Sigmoid colon (tissue), 7 donors: ENCODE measurements at regions of chr10 and their contacts with region 1.

Region 1: DNA sequence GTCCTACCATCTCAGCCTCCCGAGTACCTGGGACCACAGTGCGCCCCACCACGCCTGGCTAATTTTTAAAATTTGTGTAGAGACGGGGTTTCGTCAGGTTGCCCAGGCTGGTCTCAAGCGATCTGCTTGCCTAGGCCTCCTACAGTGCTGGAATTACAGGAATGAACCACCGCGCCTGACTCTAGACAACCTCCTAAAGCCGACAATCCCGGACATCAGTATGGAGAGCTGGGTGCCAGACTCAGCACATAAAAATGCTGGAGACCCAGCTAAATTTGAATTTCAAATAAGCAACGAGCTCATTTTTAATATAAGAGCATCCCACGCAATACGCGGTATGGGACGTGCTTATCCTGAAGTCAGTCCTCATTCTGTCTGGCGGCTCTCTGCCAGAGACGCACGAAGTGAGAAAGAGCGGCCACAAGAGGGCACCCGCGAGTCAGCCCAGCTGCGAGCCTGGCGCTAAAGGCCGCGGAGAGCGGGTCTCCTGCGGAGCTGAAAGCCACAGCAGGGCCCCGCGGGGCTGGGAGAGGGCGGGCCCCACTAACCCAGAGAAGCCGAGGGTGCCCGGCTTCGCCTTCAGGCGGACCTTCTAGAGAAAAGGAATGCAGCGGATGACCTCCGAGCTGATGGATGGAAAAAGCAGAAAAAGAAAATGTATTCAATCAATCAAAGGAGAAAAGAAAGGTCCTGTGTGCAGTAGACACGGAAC is 7.0 kb downstream of the CALY start:
- DNase-seq: peak; percentile 88
- H3K4me3 ChIP-seq: peak overlapping the region in 3 of 4 donors; percentile 21 to 31 (median 25)
- H3K27ac ChIP-seq: no peak overlapping the region
- H3K4me1 ChIP-seq: peaks cover 0 to 28% (median 25%) of the 10 kb centered on the region in 4 donors
- H3K27me3 ChIP-seq: peaks cover 43 to 87% (median 71%) of the 10 kb centered on the region in 3 donors
- CTCF ChIP-seq: peak; percentile 64 to 96 (median 76)
- EP300 ChIP-seq: no peak
- POLR2A ChIP-seq: no peak

Region 2: DNA sequence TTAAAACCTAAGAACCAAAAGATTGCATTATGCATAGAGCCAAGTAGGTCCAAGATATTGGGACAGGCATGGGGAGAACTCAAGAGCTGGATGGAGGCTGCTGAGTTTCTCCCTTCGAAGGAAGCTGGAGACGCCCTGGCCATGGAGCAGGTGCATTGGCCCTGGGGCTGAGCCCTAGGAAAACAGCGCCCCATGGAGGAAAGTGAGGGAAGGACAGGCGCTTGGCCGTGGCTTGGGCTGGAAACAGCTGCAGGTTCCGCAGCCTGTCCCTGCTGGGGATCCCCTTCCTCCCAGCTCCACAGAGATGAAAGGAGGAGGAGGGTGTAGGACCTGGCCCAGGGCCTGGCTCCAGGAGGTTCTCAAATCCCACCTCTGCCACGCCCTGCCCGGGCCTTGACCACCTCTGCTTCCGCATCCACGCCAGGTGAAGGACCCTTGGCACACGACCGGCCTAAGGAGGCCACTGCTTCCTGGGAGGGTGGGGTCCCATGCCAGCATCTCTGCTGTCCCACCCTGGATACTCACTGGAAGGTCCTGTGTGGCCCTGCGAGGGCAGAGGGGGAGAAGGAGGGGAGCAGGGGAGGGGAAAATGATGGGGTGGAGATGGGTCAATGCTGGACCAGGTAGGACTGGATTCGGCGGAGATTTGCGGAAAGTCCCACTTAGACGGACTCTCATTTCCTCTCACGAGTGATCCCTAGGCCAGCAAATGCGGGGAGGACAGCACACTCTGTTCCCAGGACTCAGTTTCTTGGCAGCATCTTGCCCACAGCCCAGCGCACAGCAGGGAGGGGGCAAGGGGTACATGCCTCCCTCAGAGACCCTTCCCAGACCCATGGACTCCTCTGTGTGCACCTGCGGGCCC is 1759.6 kb before region 1 on chr10:
- intact Hi-C with region 1: no loop called
- DNase-seq: no peak
- H3K4me3 ChIP-seq: no peak overlapping the region
- H3K27ac ChIP-seq: no peak overlapping the region
- H3K4me1 ChIP-seq: no peaks in the 10 kb centered on the region
- H3K27me3 ChIP-seq: peaks cover 0 to 7% (median 0%) of the 10 kb centered on the region in 3 donors
- CTCF ChIP-seq: no peak
- EP300 ChIP-seq: no peak
- POLR2A ChIP-seq: no peak

Region 3: GRCh38 chr10:133307776-133308420 is 21.7 kb before region 1 on chr10:
- intact Hi-C with region 1: no loop called
- DNase-seq: no peak
- H3K4me3 ChIP-seq: peak overlapping the region; percentile 60 to 99 (median 96)
- H3K27ac ChIP-seq: peak overlapping the region; percentile 86 to 97 (median 94)
- H3K4me1 ChIP-seq: peaks cover 0 to 55% (median 42%) of the 10 kb centered on the region in 4 donors
- H3K27me3 ChIP-seq: no peaks in the 10 kb centered on the region
- CTCF ChIP-seq: peak in 2 of 4 experiments; percentile 23 to 31
- EP300 ChIP-seq: no peak
- POLR2A ChIP-seq: no peak

Region 4: DNA sequence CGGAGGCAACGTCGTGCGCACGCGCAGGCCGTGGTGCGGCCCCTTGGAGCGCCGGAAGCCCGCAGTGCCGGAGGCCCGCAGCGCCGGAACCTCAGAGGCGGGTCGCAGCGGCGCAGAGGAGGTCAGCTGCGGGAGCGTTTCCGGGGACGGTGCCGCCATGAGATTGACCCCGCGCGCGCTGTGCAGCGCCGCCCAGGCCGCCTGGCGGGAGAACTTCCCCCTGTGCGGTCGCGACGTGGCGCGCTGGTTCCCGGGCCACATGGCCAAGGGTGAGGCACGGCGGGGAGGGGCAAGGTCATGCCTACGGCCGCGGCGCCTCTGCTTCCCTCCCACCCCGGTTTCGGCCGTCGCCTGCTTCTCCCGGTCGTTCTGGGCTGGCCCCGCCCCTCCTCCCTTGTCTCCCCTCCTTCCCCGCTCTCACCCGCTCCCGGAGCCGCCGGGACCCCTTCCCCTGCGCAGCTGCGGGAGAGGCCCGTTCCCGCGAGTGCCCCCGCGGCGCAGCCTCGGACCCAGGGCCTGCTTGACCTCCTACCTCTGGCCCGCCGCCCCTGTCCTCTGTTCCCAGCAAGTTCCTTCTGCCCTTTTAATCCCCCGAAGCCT is 64.5 kb after region 1 on chr10 and contains the start of gene MTG1:
- intact Hi-C with region 1: loop called (anchors 5 kb)
- DNase-seq: peak; percentile 96
- H3K4me3 ChIP-seq: peak within 1 kb of the TSS; percentile 71 to 92 (median 86)
- H3K27ac ChIP-seq: peak within 1 kb of the TSS; percentile 79 to 87 (median 81)
- H3K4me1 ChIP-seq: peaks cover 0 to 20% (median 10%) of the 10 kb centered on the region in 4 donors
- H3K27me3 ChIP-seq: no peaks in the 10 kb centered on the region
- CTCF ChIP-seq: no peak
- EP300 ChIP-seq: no peak
- POLR2A ChIP-seq: peak; percentile 29 to 67
- total RNA-seq, gene MTG1: 14.0 to 28.8 (median 17.0) TPM

Region 5: DNA sequence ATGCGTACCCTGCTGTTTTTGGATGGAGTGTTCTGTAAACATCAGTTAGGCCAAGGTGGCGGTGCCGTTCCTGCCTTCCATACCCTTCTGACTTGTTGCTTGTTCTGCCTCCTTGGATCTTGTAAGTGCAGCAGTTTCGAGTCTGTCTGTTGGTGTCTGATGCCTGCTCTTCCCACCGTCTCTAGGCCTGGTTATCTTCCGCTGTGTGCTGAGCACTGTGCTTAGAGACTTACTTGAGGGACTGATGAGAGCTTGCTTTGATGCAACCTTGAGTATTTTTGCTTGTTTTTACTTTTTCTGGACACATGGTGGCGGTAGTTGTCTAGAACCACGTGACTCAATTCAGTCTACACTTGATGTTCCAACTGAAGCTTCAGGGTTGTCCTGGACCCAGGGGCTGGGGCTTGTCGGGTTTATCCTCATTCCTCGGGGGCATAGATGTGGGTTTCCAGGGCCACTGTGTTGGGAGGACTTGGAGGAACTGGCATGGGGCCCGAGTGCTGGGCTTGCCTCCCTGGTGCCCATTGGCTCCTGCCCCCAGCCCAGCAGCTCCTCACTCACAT is 109.1 kb after region 1 on chr10:
- intact Hi-C with region 1: no loop called
- DNase-seq: no peak
- H3K4me3 ChIP-seq: no peak overlapping the region
- H3K27ac ChIP-seq: no peak overlapping the region
- H3K4me1 ChIP-seq: no peaks in the 10 kb centered on the region
- H3K27me3 ChIP-seq: no peaks in the 10 kb centered on the region
- CTCF ChIP-seq: no peak
- EP300 ChIP-seq: no peak
- POLR2A ChIP-seq: no peak

Region 6: DNA sequence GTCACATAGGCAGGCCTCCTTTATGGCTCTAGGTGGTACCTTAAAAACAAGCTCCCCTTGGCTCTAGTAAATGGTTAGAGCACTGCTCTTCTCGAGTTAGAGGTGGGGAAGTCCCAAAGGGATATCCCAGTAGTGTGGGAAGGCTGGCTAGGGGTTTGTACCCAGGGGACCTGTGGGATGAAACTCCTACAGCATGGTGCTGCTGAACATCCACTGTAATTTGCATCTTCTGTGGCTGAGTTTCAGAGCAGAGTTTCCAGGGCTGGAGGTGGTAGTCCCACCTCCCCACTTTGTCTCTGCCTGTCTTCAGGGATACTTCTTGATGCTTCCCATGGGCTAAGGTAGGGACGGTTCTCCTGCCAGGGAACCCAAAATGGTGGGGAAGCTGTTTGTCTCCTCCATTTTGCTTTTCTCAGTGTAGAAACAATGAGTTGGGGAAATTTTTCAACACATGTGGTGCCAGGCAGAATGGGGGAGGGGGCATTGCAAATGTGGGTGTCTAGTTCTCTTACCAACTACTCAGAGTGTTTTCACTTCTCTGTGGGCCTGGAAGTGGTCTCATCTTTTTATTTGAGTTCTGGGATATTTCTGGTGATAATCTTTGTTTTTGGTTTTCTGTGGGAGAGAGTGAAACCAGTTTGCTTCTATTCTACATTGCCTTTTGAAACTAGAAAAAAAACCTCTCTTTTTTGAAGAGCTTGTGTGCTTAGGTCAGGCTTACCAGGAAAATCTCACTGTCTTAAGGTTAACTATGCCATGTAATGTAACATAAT is 160.4 kb after region 1 on chr10:
- intact Hi-C with region 1: no loop called
- DNase-seq: no peak
- H3K4me3 ChIP-seq: no peak overlapping the region
- H3K27ac ChIP-seq: no peak overlapping the region
- H3K4me1 ChIP-seq: no peaks in the 10 kb centered on the region
- H3K27me3 ChIP-seq: no peaks in the 10 kb centered on the region
- CTCF ChIP-seq: no peak
- EP300 ChIP-seq: no peak
- POLR2A ChIP-seq: no peak

Region 7: DNA sequence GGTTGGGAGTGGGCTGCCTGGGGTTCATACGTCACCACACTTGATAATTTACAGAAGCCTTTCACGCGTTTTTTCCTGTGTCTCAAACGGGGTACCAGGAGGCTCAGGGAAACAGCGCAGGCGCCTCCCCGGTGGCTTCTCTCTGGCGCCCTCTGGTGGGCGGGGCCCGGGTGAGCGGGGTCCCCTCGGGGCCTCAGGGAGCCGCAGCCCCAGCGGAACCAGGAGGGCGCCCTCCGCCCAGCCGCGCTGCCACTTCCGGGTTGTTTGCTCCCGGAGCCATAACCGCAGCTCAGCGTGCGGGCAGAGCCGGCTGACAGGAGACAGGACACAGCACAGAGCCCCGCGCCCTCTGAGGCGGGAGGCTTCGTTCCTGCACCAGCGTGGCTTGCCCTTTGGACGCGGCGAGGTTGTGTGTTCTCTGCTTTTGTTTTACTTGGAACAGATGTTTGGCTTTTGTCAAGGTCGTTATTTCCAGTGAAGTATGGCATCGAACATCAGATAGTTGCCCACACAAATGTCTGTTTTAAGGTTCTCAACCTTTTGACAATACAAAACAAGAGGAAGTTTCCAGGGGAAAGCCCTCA is 190.6 kb after region 1 on chr10:
- intact Hi-C with region 1: loop called (anchors 1 kb)
- DNase-seq: peak; percentile 82
- H3K4me3 ChIP-seq: peak overlapping the region; percentile 19 to 48 (median 40)
- H3K27ac ChIP-seq: peak overlapping the region in 3 of 4 donors; percentile 55 to 65 (median 58)
- H3K4me1 ChIP-seq: peaks cover 0 to 13% (median 0%) of the 10 kb centered on the region in 4 donors
- H3K27me3 ChIP-seq: no peaks in the 10 kb centered on the region
- CTCF ChIP-seq: peak; percentile 25 to 90 (median 58)
- EP300 ChIP-seq: no peak
- POLR2A ChIP-seq: peak in 1 of 2 donors; percentile 8